GM18951 (cell line): ENCODE measurements at regions of chr17 and their contacts with region 1.

Region 1: GRCh38 chr17:28973425-28973824 is 22.1 kb upstream of the PHF12 start:
- POLR2A ChIP-seq: no peak

Region 2: GRCh38 chr17:28667870-28668269 is 305.6 kb before region 1 on chr17:
- in situ Hi-C with region 1: no loop called
- POLR2A ChIP-seq: no peak

Region 3: DNA sequence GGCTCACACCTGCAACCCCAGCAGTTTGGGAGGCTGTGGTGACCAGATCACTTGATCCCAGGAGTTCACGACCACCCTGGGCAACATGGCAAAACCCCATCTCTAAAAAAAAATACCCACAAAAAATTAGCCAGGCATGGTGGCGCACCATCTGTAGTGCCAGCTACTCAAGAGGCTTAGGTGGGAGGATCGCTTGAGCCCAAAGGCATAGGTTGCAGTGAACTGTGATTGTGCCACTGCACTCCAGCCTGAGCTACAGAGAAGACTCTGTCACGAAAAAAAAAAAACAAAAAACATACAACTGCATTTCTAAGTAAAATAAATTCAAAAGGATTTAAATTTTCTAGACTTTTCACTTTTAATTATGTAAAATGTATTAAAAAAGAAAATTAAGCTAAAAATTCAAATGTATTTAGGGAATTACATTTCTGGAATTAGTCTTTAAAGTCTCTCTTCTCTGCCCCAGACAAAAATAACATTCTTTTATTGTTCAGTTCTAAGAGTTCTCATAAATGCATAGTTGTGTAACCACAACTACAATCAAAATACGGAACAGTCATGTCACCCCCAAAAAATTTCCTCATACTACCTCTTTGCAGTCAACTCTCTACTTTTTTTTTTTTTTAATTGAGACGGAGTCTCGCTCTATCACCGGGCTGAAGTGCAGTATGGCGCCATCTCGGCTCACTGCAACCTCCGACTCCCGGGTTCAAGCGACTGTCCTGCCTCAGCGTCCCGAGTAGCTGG is 145.0 kb before region 1 on chr17:
- in situ Hi-C with region 1: no loop called
- POLR2A ChIP-seq: no peak

Region 4: DNA sequence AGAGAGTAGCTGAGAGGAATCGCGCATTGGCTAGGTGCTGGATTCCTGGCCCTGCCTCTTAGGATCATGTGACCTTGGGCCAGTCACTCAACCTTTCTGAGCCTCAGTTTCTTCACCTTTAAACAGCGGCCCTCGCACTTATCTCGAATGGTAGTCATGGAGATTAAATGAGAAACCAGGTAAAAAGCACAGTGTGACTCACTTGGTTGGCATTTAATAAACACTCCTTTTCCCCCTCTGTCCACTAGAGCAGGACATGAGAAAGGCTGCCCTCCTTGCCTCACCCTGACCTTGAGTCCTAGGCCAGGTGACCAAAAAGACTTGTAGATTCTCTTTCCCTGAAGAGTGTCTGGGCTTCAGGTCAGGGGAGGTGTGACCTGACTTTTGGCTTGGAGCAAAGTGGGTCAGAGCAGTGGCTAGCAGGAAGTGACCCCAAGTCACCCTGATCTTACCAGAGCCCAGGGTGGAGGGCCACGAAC is 134.6 kb after region 1 on chr17:
- in situ Hi-C with region 1: loop called (anchors 10 kb)
- POLR2A ChIP-seq: no peak